CD4-positive, alpha-beta memory T cell (primary cell): ENCODE measurements at regions of chr2 and their contacts with region 1.

Region 1: GRCh38 chr2:233404222-233404621 is 49.9 kb downstream of the DGKD start:
- DNase-seq: peak; percentile 74 to 78 (median 75)
- H3K4me3 ChIP-seq: no peak overlapping the region
- H3K4me3 Mint-ChIP-seq: peak overlapping the region in 2 of 8 donors; percentile 1
- H3K27ac ChIP-seq: no peak overlapping the region
- H3K27ac Mint-ChIP-seq: peak overlapping the region; percentile 14 to 91 (median 77)
- H3K4me1 ChIP-seq: peaks cover 44% of the 10 kb centered on the region
- H3K4me1 Mint-ChIP-seq: peaks cover 40 to 77% (median 58%) of the 10 kb centered on the region in 4 donors
- H3K27me3 ChIP-seq: no peaks in the 10 kb centered on the region
- H3K27me3 Mint-ChIP-seq: no peaks in the 10 kb centered on the region

Region 2: GRCh38 chr2:233281992-233282603 is 122.1 kb before region 1 on chr2:
- CTCF ChIA-PET with region 1: no interaction called
- POLR2A ChIA-PET with region 1: no interaction called
- intact Hi-C with region 1: no loop called
- DNase-seq: no peak
- H3K4me3 ChIP-seq: no peak overlapping the region
- H3K4me3 Mint-ChIP-seq: no peak overlapping the region
- H3K27ac ChIP-seq: no peak overlapping the region
- H3K27ac Mint-ChIP-seq: peak overlapping the region in 6 of 7 donors; percentile 43 to 82 (median 58)
- H3K4me1 ChIP-seq: no peaks in the 10 kb centered on the region
- H3K4me1 Mint-ChIP-seq: peaks cover 14 to 33% (median 19%) of the 10 kb centered on the region in 4 donors
- H3K27me3 ChIP-seq: no peaks in the 10 kb centered on the region
- H3K27me3 Mint-ChIP-seq: no peaks in the 10 kb centered on the region

Region 3: DNA sequence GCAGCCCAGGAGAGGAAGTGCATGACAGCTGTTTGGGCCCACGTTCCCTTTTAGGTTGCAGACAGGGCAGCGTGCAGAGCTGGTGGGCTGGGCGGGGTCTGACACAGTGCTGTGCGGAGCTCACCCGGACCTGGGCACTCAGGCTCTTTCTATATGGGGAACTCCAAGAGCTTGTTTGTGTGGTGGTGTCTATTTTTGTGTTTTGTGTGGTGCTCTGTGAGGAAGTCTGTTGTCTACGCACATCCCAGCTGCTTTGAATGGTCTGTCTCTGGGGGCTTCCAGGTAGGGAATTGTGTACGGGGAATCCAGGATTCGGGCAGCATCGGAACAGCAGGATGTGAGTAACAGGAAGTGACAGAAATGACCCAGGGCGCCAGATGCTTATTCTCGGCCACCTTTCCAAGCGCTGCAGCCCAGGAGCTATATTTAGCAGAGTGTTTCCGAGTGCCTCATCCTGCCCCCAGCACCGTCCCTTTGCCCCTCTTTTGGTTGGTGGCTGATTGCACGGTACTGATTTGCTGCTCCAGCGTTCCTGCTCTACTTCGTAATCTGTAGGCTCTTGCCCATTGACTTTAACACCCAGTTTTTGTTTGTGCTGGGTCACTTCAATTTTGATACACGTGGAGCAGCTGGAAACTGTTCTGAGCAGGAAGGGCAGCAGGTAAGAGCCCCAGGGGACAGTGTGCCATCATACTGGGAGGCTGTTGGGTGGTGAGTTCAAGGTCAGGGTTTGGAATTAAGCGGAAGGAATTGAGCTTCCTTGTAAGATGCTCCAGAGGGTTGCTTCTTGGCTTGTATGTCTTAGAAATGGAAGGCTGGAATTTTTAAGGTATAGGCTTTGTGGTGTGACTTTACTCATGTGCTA is 14.8 kb after region 1 on chr2:
- CTCF ChIA-PET with region 1: interaction called, 342 read pairs
- POLR2A ChIA-PET with region 1: interaction called, 225 read pairs
- intact Hi-C with region 1: loop called (anchors 1 kb)
- DNase-seq: peak; percentile 36 to 79 (median 45)
- H3K4me3 ChIP-seq: peak overlapping the region; percentile 53 to 56
- H3K4me3 Mint-ChIP-seq: peak overlapping the region; percentile 87 to 99 (median 92)
- H3K27ac ChIP-seq: peak overlapping the region; percentile 71
- H3K27ac Mint-ChIP-seq: peak overlapping the region; percentile 93 to 99 (median 96)
- H3K4me1 ChIP-seq: peaks cover 100% of the 10 kb centered on the region
- H3K4me1 Mint-ChIP-seq: peaks cover 73 to 99% (median 89%) of the 10 kb centered on the region in 4 donors
- H3K27me3 ChIP-seq: no peaks in the 10 kb centered on the region
- H3K27me3 Mint-ChIP-seq: no peaks in the 10 kb centered on the region

Region 4: GRCh38 chr2:233434666-233435330 is 30.6 kb after region 1 on chr2:
- CTCF ChIA-PET with region 1: interaction called, 510 read pairs
- POLR2A ChIA-PET with region 1: interaction called, 6 read pairs
- intact Hi-C with region 1: no loop called
- DNase-seq: no peak
- H3K4me3 ChIP-seq: no peak overlapping the region
- H3K4me3 Mint-ChIP-seq: no peak overlapping the region
- H3K27ac ChIP-seq: no peak overlapping the region
- H3K27ac Mint-ChIP-seq: peak overlapping the region in 5 of 7 donors; percentile 5 to 82 (median 41)
- H3K4me1 ChIP-seq: peaks cover 12% of the 10 kb centered on the region
- H3K4me1 Mint-ChIP-seq: peaks cover 13 to 28% (median 25%) of the 10 kb centered on the region in 4 donors
- H3K27me3 ChIP-seq: no peaks in the 10 kb centered on the region
- H3K27me3 Mint-ChIP-seq: no peaks in the 10 kb centered on the region